CD8-positive, alpha-beta T cell (primary cell): ENCODE measurements at regions of chr2 and their contacts with region 1.

Region 1: GRCh38 chr2:26075963-26076605 is 42.2 kb downstream of the RAB10 start:
- DNase-seq: no peak
- ATAC-seq: no peak
- H3K4me3 ChIP-seq: no peak overlapping the region
- H3K4me3 Mint-ChIP-seq: no peak overlapping the region
- H3K27ac ChIP-seq: no peak overlapping the region
- H3K27ac Mint-ChIP-seq: no peak overlapping the region
- H3K4me1 ChIP-seq: no peaks in the 10 kb centered on the region
- H3K4me1 Mint-ChIP-seq: peaks cover 38% of the 10 kb centered on the region
- H3K27me3 ChIP-seq: no peaks in the 10 kb centered on the region
- H3K27me3 Mint-ChIP-seq: no peaks in the 10 kb centered on the region
- CTCF ChIP-seq: no peak

Region 2: GRCh38 chr2:26025509-26025908 is 50.6 kb before region 1 on chr2:
- CTCF ChIA-PET with region 1: no interaction called
- POLR2A ChIA-PET with region 1: no interaction called
- intact Hi-C with region 1: no loop called
- DNase-seq: no peak
- ATAC-seq: no peak
- H3K4me3 ChIP-seq: no peak overlapping the region
- H3K4me3 Mint-ChIP-seq: no peak overlapping the region
- H3K27ac ChIP-seq: no peak overlapping the region
- H3K27ac Mint-ChIP-seq: no peak overlapping the region
- H3K4me1 ChIP-seq: no peaks in the 10 kb centered on the region
- H3K4me1 Mint-ChIP-seq: no peaks in the 10 kb centered on the region
- H3K27me3 ChIP-seq: no peaks in the 10 kb centered on the region
- H3K27me3 Mint-ChIP-seq: peaks cover 2% of the 10 kb centered on the region
- CTCF ChIP-seq: no peak

Region 3: DNA sequence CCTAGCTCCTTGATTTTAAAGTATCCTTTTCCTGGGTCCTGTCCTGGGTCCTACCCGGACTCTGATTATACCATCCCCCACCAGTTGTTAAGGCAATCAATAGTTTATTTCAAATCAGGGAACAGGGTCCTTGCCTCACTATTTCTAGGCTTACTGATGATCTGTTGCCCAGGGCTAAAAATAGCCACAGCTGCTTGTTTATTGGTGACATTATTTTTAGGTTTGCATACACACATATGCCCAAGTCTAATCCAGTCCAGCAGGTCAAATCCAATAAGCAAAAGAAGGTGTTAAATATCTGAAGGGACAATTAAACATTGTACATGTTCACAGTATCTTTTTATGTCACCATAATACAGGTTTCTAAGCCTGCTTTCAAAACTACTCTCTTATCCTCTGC is 23.8 kb after region 1 on chr2:
- CTCF ChIA-PET with region 1: no interaction called
- POLR2A ChIA-PET with region 1: no interaction called
- intact Hi-C with region 1: loop called in 1 of 2 experiments (anchors 1 kb)
- DNase-seq: no peak
- ATAC-seq: no peak
- H3K4me3 ChIP-seq: no peak overlapping the region
- H3K4me3 Mint-ChIP-seq: no peak overlapping the region
- H3K27ac ChIP-seq: no peak overlapping the region
- H3K27ac Mint-ChIP-seq: no peak overlapping the region
- H3K4me1 ChIP-seq: no peaks in the 10 kb centered on the region
- H3K4me1 Mint-ChIP-seq: peaks cover 49% of the 10 kb centered on the region
- H3K27me3 ChIP-seq: no peaks in the 10 kb centered on the region
- H3K27me3 Mint-ChIP-seq: no peaks in the 10 kb centered on the region
- CTCF ChIP-seq: no peak

Region 4: GRCh38 chr2:26363323-26363722 is 287.2 kb after region 1 on chr2:
- CTCF ChIA-PET with region 1: no interaction called
- POLR2A ChIA-PET with region 1: no interaction called
- intact Hi-C with region 1: no loop called
- DNase-seq: no peak
- ATAC-seq: no peak
- H3K4me3 ChIP-seq: no peak overlapping the region
- H3K4me3 Mint-ChIP-seq: no peak overlapping the region
- H3K27ac ChIP-seq: no peak overlapping the region
- H3K27ac Mint-ChIP-seq: no peak overlapping the region
- H3K4me1 ChIP-seq: no peaks in the 10 kb centered on the region
- H3K4me1 Mint-ChIP-seq: peaks cover 36% of the 10 kb centered on the region
- H3K27me3 ChIP-seq: no peaks in the 10 kb centered on the region
- H3K27me3 Mint-ChIP-seq: no peaks in the 10 kb centered on the region
- CTCF ChIP-seq: no peak